ENCODE measurements at regions of chr6 and their contacts with region 1.

Region 1: GRCh38 chr6:151335930-151336329 is 55.4 kb downstream of the ZBTB2 start:
- DNase-seq: no peak
- H3K27ac ChIP-seq: no peak overlapping the region
- CTCF ChIP-seq: no peak

Region 2: GRCh38 chr6:151004415-151005024 is 331.4 kb before region 1 on chr6:
- CTCF ChIA-PET with region 1: interaction called, 11 read pairs
- POLR2A ChIA-PET with region 1: no interaction called
- DNase-seq: peak; percentile 74
- H3K27ac ChIP-seq: peak overlapping the region; percentile 59; the same call in 1 of the 2 replicates
- CTCF ChIP-seq: no peak

Region 3: DNA sequence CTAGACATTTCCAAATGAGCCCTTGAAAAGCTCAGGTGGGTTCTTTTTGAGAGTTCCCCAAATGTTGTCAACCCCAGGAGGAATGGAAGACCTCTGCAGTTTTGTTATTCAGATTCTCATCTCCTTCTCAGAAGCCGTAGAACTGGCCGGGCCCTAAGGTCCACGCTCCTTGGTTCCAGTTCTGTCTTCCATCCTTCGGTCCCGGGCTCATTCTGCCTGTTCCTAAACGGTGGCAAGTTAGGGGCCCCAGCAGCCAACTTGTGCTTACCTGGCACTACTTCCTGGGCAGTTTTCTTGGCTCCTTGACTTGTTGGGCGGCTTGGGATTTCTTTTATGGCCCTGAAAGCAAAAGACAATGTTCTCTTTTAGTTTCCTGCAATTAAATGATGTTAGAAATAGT is 477.9 kb after region 1 on chr6:
- CTCF ChIA-PET with region 1: no interaction called
- POLR2A ChIA-PET with region 1: no interaction called
- DNase-seq: no peak
- H3K27ac ChIP-seq: no peak overlapping the region
- CTCF ChIP-seq: no peak